ACHN (cell line): ENCODE measurements at regions of chr17 and their contacts with region 1.

Region 1: GRCh38 chr17:4625181-4625617 is 16.3 kb downstream of the ALOX15 start:
- DNase-seq: no peak

Region 2: GRCh38 chr17:4565209-4566141 is 59.7 kb before region 1 on chr17:
- in situ Hi-C with region 1: loop called (anchors 10 kb)
- DNase-seq: peak; percentile 81